Dorsolateral prefrontal cortex (tissue), 120 donors: ENCODE measurements at regions of chr4 and their contacts with region 1.

Region 1: GRCh38 chr4:150867148-150867547 is 147.9 kb downstream of the LRBA start:
- DNase-seq: peak in 1 of 10 donors; percentile 22
- H3K4me3 ChIP-seq: no peak overlapping the region
- H3K27ac ChIP-seq: no peak overlapping the region
- H3K27me3 ChIP-seq: no peaks in the 10 kb centered on the region
- CTCF ChIP-seq: peak; percentile 58 to 89 (median 77)

Region 2: GRCh38 chr4:149999485-150000074 is 867.6 kb before region 1 on chr4:
- intact Hi-C with region 1: loop called (anchors 5 to 10 kb)
- DNase-seq: peak in 4 of 10 donors; percentile 5 to 57 (median 32)
- H3K4me3 ChIP-seq: peak overlapping the region in 1 of 59 donors; percentile 4
- H3K27ac ChIP-seq: no peak overlapping the region
- H3K27me3 ChIP-seq: no peaks in the 10 kb centered on the region
- CTCF ChIP-seq: peak; percentile 54 to 92 (median 78)

Region 3: DNA sequence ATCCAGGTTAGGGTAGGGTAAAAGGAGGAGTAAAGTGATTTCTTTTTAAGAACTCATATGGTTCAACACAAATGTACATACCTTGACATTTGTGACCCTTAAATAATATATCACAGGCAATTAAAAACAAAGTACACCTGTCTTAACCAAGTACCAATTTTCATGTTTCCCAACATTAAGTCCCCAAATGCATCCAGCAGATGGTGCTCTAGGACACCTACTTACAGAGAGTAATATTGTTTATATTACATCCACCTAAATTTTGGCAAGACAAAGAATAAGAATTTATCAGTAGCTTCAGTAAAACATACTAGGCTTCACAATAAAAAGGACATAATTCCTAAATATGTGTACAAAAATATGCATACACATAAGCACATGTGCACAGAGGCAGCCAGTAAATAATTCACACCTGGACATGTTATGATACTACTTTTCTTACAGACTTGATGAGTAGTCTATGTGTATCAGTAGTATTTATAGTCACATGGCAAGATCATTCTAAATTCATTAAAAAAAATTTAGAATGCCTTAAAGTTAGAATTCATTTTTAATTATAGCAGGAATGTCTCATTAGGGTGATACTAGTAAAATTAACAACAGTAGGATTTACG is 569.2 kb before region 1 on chr4:
- intact Hi-C with region 1: loop called (anchors 5 to 10 kb)
- DNase-seq: peak in 2 of 10 donors; percentile 37 to 70
- H3K4me3 ChIP-seq: no peak overlapping the region
- H3K27ac ChIP-seq: no peak overlapping the region
- H3K27me3 ChIP-seq: no peaks in the 10 kb centered on the region
- CTCF ChIP-seq: peak; percentile 47 to 84 (median 67)

Region 4: GRCh38 chr4:150436598-150437370 is 430.4 kb before region 1 on chr4:
- intact Hi-C with region 1: no loop called
- DNase-seq: no peak
- H3K4me3 ChIP-seq: no peak overlapping the region
- H3K27ac ChIP-seq: no peak overlapping the region
- H3K27me3 ChIP-seq: no peaks in the 10 kb centered on the region
- CTCF ChIP-seq: no peak

Region 5: GRCh38 chr4:150751648-150752047 is 115.5 kb before region 1 on chr4:
- intact Hi-C with region 1: no loop called
- DNase-seq: no peak
- H3K4me3 ChIP-seq: no peak overlapping the region
- H3K27ac ChIP-seq: no peak overlapping the region
- H3K27me3 ChIP-seq: no peaks in the 10 kb centered on the region
- CTCF ChIP-seq: no peak